Activated T-helper 1 cell treated with anti-CD3 and anti-CD28 coated beads, Interleukin-12 subunit alpha, Interleukin-12 subunit beta, Interleukin-2, Interleukin-4 antibody, amounts not matched to agents 30 ng/mL and 10 ng/mL and 1 ng/mL, durations not matched to agents 14 hours and 24 hours and 36 hours (primary cell): ENCODE measurements at regions of chr3 and their contacts with region 1.

Region 1: GRCh38 chr3:71725279-71725991 is at the start of gene EIF4E3:
- DNase-seq: peak; percentile 43
- H3K4me3 Mint-ChIP-seq: peak within 1 kb of the TSS; percentile 90
- H3K27ac Mint-ChIP-seq: peak within 1 kb of the TSS; percentile 95
- H3K4me1 Mint-ChIP-seq: peaks cover 75% of the 10 kb centered on the region
- H3K27me3 Mint-ChIP-seq: no peaks in the 10 kb centered on the region
- total RNA-seq, gene EIF4E3: 20.6 and 21.8 TPM in 2 replicates

Region 2: DNA sequence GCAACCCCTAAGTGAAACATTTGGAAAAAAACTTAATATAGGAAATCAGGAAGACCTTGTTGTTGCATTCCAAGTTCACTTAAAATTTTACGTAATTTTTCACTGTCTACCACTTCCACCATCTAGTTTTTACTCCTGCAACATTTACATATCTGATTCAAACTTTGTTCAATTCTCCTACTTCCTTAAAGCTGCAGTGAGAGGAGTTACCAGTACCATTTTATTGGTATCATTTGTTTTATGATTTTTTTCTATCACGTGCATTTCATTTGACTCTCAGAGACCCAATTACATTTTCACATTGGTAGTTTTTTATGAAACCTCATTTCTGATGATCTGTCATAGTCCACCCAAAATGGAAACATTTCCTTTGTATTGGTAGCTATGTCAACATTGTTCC is 1128.1 kb before region 1 on chr3:
- intact Hi-C with region 1: no loop called
- DNase-seq: no peak
- H3K4me3 Mint-ChIP-seq: no peak overlapping the region
- H3K27ac Mint-ChIP-seq: no peak overlapping the region
- H3K4me1 Mint-ChIP-seq: no peaks in the 10 kb centered on the region
- H3K27me3 Mint-ChIP-seq: peaks cover 2% of the 10 kb centered on the region

Region 3: GRCh38 chr3:71710906-71711494 is 14.4 kb before region 1 on chr3:
- intact Hi-C with region 1: loop called (anchors 1 kb)
- DNase-seq: no peak
- H3K4me3 Mint-ChIP-seq: no peak overlapping the region
- H3K27ac Mint-ChIP-seq: no peak overlapping the region
- H3K4me1 Mint-ChIP-seq: peaks cover 56% of the 10 kb centered on the region
- H3K27me3 Mint-ChIP-seq: no peaks in the 10 kb centered on the region

Region 4: DNA sequence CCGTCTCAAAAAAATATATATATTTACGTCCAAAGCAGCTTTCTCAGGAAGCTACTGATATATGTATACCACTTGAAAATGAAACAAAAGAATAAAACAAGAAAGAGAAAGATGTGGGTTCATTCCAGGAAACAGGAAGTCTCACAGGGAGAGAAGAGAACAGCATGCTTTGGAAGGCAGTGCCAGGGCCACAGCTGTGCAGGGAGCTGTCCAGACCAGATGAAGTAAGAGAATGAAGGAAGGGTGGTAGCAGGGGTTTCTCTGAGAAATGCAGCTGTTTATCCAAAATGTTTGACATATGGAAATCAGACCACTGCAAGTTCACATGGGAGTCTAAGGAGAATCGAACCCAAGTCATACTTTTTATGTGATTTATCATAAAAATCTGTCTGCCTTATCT is 19.3 kb after region 1 on chr3:
- intact Hi-C with region 1: no loop called
- DNase-seq: no peak
- H3K4me3 Mint-ChIP-seq: no peak overlapping the region
- H3K27ac Mint-ChIP-seq: no peak overlapping the region
- H3K4me1 Mint-ChIP-seq: no peaks in the 10 kb centered on the region
- H3K27me3 Mint-ChIP-seq: peaks cover 30% of the 10 kb centered on the region

Region 5: GRCh38 chr3:71831599-71831998 is 106.2 kb after region 1 on chr3:
- intact Hi-C with region 1: no loop called
- DNase-seq: no peak
- H3K4me3 Mint-ChIP-seq: no peak overlapping the region
- H3K27ac Mint-ChIP-seq: no peak overlapping the region
- H3K4me1 Mint-ChIP-seq: no peaks in the 10 kb centered on the region
- H3K27me3 Mint-ChIP-seq: peaks cover 6% of the 10 kb centered on the region

Region 6: DNA sequence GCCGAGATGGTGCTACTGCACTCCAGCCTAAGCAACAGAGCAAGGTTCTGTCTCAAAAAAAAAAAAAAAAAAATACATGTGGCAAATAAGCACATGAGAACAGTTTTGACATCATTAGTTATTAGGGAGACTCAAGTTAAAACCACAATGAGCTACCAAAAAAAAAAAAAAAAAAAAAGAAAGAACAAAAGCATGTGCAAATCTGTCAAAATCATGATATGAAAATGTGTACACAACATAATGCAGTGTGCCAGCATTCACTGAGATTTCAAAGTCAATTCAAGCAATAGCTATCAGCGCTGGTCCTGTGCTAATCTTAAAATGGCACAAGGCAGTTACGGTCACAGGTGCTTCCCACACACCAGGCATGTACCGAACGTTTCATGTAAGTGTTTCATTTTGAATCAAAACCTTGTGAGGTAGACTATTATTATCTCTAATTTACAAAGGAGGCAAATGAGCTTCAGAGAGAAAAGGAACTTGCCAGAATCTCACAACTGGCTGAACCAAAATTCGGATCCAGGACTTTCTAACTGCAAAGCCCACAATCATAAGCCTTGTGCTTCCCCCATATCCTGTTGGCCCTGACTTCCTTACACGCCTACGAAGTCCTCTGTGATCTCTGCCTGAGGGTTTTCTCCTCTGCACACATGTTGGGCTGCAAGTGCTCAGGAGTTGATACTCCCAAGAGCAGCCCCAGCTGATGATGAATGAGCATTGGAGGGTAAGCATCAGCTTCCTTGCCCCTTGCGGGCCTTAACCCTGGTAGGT is 259.6 kb after region 1 on chr3:
- intact Hi-C with region 1: loop called (anchors 1 kb)
- DNase-seq: peak; percentile 21
- H3K4me3 Mint-ChIP-seq: peak overlapping the region; percentile 62
- H3K27ac Mint-ChIP-seq: peak overlapping the region; percentile 91
- H3K4me1 Mint-ChIP-seq: peaks cover 62% of the 10 kb centered on the region
- H3K27me3 Mint-ChIP-seq: no peaks in the 10 kb centered on the region

Region 7: GRCh38 chr3:72375237-72376076 is 650.0 kb after region 1 on chr3:
- intact Hi-C with region 1: loop called (anchors 1 kb)
- DNase-seq: no peak
- H3K4me3 Mint-ChIP-seq: peak overlapping the region; percentile 32
- H3K27ac Mint-ChIP-seq: peak overlapping the region; percentile 92
- H3K4me1 Mint-ChIP-seq: peaks cover 48% of the 10 kb centered on the region
- H3K27me3 Mint-ChIP-seq: no peaks in the 10 kb centered on the region

Region 8: GRCh38 chr3:72738752-72739530 is 1013.5 kb after region 1 on chr3:
- intact Hi-C with region 1: loop called (anchors 5 kb)
- DNase-seq: peak; percentile 61
- H3K4me3 Mint-ChIP-seq: peak overlapping the region; percentile 81
- H3K27ac Mint-ChIP-seq: peak overlapping the region; percentile 64
- H3K4me1 Mint-ChIP-seq: peaks cover 19% of the 10 kb centered on the region
- H3K27me3 Mint-ChIP-seq: no peaks in the 10 kb centered on the region

Region 9: DNA sequence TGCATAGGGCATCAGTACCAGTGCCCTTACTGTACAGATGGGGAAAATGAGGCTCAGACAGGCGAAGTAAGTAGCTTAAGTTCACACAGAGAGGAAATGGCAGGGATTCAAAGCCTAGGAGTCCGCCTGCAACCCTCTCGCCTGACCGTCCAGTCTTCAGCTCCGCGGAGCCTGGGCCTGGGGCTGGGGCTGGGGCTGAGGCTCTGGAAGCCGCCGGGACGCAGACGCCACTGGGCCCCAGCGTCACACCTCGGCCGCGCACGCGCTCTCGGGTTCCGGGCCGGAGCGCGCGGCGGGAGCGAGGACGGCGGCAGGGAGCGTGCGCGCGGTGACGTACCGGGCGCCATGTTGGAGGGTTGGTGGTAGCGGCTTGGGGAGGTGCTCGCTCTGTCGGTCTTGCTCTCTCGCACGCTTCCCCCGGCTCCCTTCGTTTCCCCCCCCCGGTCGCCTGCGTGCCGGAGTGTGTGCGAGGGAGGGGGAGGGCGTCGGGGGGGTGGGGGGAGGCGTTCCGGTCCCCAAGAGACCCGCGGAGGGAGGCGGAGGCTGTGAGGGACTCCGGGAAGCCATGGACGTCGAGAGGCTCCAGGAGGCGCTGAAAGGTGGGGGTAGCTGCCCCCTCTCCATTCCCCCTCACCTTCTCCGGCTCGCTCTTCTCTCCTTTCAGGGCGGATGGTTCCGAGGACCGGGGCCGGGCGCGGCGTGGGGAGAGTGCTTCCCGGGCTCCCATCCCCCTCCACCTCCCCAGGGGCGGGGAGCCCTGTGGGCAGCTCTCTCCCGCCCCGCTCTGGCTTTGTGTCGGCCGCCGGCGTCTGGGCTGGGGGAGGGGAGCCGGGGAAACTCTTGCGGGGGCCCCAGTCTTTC is 1271.3 kb after region 1 on chr3 and contains the start of gene PPP4R2:
- intact Hi-C with region 1: loop called (anchors 5 kb)
- DNase-seq: peak; percentile 90
- H3K4me3 Mint-ChIP-seq: peak within 1 kb of the TSS; percentile 96
- H3K27ac Mint-ChIP-seq: peak within 1 kb of the TSS; percentile 96
- H3K4me1 Mint-ChIP-seq: peaks cover 49% of the 10 kb centered on the region
- H3K27me3 Mint-ChIP-seq: no peaks in the 10 kb centered on the region
- total RNA-seq, gene PPP4R2: 113 and 125 TPM in 2 replicates